IMR-90 (cell line): ENCODE measurements at regions of chr2 and their contacts with region 1.

Region 1: DNA sequence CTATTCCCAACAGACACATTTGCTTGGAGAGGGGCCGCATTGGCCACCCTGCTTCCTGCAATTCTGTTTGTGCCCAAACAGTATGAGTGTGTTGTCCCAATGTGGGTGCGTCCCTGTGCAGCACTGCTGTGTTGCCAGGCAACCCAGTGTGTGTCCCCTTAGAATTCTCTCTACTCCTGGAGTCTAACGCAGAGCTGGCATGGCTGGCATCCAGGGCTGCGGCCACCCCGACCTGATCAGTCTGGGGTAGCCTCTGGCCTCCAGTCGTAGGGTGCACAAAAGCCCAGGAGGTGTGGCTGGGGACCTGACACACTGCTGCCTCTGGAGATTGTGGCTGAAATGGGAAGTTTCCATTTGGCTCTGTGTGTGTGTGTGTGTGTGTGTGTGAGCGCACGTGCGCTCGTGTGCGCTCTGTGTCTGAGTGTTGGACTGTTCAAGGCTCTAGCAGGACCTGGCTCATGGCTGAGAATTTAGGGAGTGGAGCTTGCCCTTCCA is 48.0 kb downstream of the TEX44 start:
- DNase-seq: no peak
- ATAC-seq: no peak
- H3K4me3 ChIP-seq: no peak overlapping the region
- H3K27ac ChIP-seq: peak overlapping the region; percentile 47; the same call in 1 of the 2 replicates
- H3K4me1 ChIP-seq: peaks cover 13% of the 10 kb centered on the region
- H3K27me3 ChIP-seq: no peaks in the 10 kb centered on the region
- CTCF ChIP-seq: no peak
- POLR2A ChIP-seq: no peak
- RAD21 ChIP-seq: no peak

Region 2: DNA sequence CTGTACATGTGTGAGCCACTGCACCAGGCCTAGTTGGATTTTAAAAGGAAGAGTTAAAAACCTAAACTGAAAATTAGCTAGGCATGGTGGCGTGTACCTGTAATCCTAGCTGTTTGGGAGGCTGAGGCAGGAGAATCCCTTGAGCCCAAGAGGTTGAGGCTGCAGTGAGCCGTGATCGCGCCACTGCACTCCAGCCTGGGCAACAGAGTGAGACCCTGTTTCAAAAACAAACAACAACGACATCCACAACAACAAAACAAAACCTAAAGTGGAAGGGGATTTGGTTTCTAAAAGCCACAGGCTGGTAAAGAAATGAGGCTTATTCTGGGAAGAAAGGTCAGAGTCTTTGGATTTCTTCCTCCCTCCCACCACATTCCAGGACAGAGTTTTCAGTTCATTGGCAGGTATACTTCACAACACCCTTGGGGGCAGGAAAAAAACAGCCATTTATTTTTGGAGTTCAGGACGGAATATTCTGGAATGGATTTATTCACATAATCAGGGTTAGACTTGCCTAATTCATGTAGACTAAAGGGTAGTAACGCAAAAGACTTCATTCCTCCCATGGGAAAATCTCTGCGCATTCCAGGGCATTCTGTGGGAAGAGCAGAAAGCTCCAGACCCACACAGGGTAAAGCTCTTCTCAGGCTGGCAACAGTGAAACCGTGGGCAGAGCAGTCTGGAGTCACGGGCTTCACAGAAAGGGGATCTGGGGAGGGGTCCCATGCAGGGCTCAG is 13.1 kb before region 1 on chr2:
- CTCF ChIA-PET with region 1: no interaction called
- POLR2A ChIA-PET with region 1: interaction called, 16 read pairs
- dilution Hi-C with region 1: no loop called
- in situ Hi-C with region 1: no loop called
- intact Hi-C with region 1: no loop called
- DNase-seq: peak; percentile 44
- ATAC-seq: peak; percentile 19; the same call in 1 of the 2 replicates
- H3K4me3 ChIP-seq: no peak overlapping the region
- H3K27ac ChIP-seq: no peak overlapping the region
- H3K4me1 ChIP-seq: peaks cover 11% of the 10 kb centered on the region
- H3K27me3 ChIP-seq: no peaks in the 10 kb centered on the region
- CTCF ChIP-seq: no peak
- POLR2A ChIP-seq: no peak
- RAD21 ChIP-seq: no peak

Region 3: GRCh38 chr2:231655897-231656296 is 15.2 kb after region 1 on chr2:
- CTCF ChIA-PET with region 1: no interaction called
- POLR2A ChIA-PET with region 1: no interaction called
- dilution Hi-C with region 1: no loop called
- in situ Hi-C with region 1: no loop called
- intact Hi-C with region 1: no loop called
- DNase-seq: no peak
- ATAC-seq: no peak
- H3K4me3 ChIP-seq: no peak overlapping the region
- H3K27ac ChIP-seq: no peak overlapping the region
- H3K4me1 ChIP-seq: no peaks in the 10 kb centered on the region
- H3K27me3 ChIP-seq: no peaks in the 10 kb centered on the region
- CTCF ChIP-seq: no peak
- POLR2A ChIP-seq: no peak
- RAD21 ChIP-seq: no peak